AG04450 (cell line): ENCODE measurements at regions of chr14 and their contacts with region 1.

Region 1: DNA sequence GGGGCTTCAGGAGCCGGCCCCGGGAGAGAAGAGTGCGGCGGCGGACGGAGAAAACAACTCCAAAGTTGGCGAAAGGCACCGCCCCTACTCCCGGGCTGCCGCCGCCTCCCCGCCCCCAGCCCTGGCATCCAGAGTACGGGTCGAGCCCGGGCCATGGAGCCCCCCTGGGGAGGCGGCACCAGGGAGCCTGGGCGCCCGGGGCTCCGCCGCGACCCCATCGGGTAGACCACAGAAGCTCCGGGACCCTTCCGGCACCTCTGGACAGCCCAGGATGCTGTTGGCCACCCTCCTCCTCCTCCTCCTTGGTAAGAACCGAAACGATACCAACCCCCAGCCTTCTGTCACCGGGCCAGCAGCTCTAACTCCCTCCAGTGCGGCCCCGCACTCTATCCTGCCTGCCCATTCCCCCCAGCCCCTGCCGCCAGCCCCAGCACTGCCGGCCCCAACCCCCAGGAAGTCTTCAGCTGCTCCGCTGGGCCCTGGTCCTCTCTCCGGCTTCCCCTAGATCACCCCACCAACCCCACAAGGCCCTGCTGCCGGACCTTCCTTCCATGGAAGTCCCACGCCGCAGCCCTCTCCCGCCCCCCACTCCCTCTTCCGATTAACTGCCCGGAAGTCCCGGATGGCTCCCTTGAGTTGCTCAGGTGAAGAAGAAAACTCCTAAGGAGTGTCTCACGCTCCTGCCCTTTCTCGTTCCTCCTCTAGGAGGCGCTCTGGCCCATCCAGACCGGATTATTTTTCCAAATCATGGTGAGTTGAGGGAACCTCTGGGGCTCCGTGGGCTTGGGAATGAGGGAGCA is 693 bp downstream of the LRP10 start:
- DNase-seq: peak; percentile 58
- H3K4me3 ChIP-seq: peak overlapping the region; percentile 80
- H3K27ac ChIP-seq: peak overlapping the region; percentile 91
- H3K27me3 ChIP-seq: no peaks in the 10 kb centered on the region
- CTCF ChIP-seq: peak; percentile 96

Region 2: DNA sequence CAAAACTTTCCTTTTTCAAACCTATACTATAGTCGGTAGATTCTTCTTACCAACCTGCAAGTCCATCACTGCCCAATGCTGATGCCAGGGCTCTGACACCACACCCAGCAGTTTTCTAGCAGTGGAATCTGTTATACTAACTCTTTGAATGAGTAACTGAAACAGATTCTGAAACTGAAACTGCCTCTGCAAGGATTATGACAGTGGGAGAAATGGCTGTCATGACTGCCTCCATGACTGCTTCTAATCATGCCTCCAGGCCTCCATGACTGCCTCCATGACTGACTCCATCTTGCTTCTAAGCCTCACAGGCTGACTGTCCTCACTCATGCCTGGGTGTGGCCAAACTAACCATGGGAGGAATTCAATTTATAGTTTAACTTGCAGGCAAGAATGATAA is 135.2 kb before region 1 on chr14:
- CTCF ChIA-PET with region 1: no interaction called
- POLR2A ChIA-PET with region 1: no interaction called
- DNase-seq: no peak
- H3K4me3 ChIP-seq: no peak overlapping the region
- H3K27ac ChIP-seq: no peak overlapping the region
- H3K27me3 ChIP-seq: peaks cover 5% of the 10 kb centered on the region
- CTCF ChIP-seq: no peak

Region 3: GRCh38 chr14:22886500-22887259 is 14.4 kb after region 1 on chr14:
- CTCF ChIA-PET with region 1: interaction called, 110 read pairs
- POLR2A ChIA-PET with region 1: interaction called, 5 read pairs
- DNase-seq: no peak
- H3K4me3 ChIP-seq: peak overlapping the region; percentile 63
- H3K27ac ChIP-seq: peak overlapping the region; percentile 65
- H3K27me3 ChIP-seq: no peaks in the 10 kb centered on the region
- CTCF ChIP-seq: no peak

Region 4: GRCh38 chr14:22892488-22892887 is 20.3 kb after region 1 on chr14:
- CTCF ChIA-PET with region 1: interaction called, 110 read pairs
- POLR2A ChIA-PET with region 1: interaction called, 5 read pairs
- DNase-seq: no peak
- H3K4me3 ChIP-seq: no peak overlapping the region
- H3K27ac ChIP-seq: no peak overlapping the region
- H3K27me3 ChIP-seq: no peaks in the 10 kb centered on the region
- CTCF ChIP-seq: no peak

Region 5: DNA sequence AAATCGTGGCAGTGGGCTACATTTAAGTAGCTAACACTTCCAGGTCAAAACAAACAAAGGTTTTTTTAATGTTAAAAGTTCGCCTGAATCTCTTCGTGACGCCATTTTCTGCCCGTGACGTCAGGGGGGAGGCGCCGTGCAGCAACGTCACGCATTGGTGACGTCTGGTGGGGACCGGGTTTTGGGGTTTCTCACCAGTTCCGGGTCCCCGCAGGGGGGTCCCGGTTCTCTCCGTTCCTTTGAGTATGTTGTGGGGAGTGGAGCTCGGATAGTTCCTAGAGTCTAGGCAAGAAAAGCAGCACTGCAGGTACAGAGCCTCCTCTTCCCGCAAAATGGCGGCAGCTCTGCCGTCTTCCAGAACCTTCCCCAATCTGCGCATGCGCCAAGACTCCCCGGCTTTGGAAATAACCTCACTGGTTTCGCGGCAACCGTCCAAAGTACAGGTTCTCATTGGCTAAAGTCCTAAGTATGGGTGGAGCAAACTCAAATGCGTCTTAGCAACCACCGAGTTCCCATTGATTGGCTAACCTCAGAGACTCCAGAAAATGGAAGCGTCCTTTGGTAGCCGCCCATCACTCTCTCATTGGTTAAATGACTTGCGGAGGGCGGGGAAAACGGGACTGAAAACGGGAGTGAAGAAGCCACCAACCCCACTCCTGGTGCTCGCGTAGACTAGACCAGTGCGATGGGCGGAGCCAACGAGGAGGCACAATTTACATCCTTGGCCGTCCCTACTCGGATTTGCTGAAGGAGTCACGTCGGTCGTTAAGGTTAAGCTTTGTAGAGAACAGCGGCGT is 46.8 kb after region 1 on chr14 and contains the start of gene RBM23:
- CTCF ChIA-PET with region 1: interaction called, 13 read pairs
- POLR2A ChIA-PET with region 1: no interaction called
- DNase-seq: peak; percentile 100
- H3K4me3 ChIP-seq: peak within 1 kb of the TSS; percentile 95
- H3K27ac ChIP-seq: peak within 1 kb of the TSS; percentile 99
- H3K27me3 ChIP-seq: no peaks in the 10 kb centered on the region
- CTCF ChIP-seq: no peak
- polyA plus RNA-seq, gene RBM23: 46.2 and 47.2 TPM in 2 replicates

Region 6: DNA sequence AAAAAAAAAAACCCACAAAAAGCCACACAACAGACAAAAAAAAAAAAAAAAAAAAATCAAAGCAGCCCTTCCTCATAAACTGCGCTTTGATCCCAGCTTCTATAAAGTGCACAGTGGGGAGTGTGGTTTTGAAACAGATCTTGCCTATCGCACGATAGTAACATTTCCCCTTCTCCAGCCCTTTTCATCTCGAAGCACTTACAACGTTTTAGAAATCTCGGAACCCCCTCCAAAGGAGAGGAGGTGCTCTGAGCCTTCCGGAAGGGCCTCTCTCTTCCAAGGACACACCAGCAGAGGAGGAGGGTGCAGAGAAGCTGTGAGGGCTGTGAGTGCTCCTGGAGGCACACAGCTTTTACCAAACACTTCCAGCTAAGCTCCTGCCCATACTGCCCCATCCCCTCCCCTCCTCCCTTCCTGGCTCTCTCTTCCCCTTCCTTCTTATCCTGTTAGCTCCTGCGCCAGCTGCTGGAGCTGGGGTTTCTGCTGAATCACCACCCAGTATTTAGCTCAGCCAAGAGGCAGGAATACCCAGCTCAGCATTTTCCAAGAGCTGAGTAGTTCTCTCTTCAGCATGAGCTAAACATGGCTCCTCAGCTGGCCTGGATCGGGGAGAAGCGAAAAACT is 282.8 kb after region 1 on chr14:
- CTCF ChIA-PET with region 1: no interaction called
- POLR2A ChIA-PET with region 1: no interaction called
- DNase-seq: peak; percentile 77
- H3K4me3 ChIP-seq: peak overlapping the region; percentile 36
- H3K27ac ChIP-seq: peak overlapping the region; percentile 83
- H3K27me3 ChIP-seq: peaks cover 5% of the 10 kb centered on the region
- CTCF ChIP-seq: no peak